Right cardiac atrium (tissue), 5 donors: ENCODE measurements at regions of chr5 and their contacts with region 1.

Region 1: GRCh38 chr5:180668835-180669596 is 19.6 kb upstream of the FLT4 start:
- DNase-seq: peak in 1 of 3 donors; percentile 37
- ATAC-seq: peak in 1 of 2 donors; percentile 24
- H3K4me3 ChIP-seq: no peak overlapping the region
- H3K27ac ChIP-seq: no peak overlapping the region
- H3K4me1 ChIP-seq: no peaks in the 10 kb centered on the region
- H3K27me3 ChIP-seq: no peaks in the 10 kb centered on the region

Region 2: DNA sequence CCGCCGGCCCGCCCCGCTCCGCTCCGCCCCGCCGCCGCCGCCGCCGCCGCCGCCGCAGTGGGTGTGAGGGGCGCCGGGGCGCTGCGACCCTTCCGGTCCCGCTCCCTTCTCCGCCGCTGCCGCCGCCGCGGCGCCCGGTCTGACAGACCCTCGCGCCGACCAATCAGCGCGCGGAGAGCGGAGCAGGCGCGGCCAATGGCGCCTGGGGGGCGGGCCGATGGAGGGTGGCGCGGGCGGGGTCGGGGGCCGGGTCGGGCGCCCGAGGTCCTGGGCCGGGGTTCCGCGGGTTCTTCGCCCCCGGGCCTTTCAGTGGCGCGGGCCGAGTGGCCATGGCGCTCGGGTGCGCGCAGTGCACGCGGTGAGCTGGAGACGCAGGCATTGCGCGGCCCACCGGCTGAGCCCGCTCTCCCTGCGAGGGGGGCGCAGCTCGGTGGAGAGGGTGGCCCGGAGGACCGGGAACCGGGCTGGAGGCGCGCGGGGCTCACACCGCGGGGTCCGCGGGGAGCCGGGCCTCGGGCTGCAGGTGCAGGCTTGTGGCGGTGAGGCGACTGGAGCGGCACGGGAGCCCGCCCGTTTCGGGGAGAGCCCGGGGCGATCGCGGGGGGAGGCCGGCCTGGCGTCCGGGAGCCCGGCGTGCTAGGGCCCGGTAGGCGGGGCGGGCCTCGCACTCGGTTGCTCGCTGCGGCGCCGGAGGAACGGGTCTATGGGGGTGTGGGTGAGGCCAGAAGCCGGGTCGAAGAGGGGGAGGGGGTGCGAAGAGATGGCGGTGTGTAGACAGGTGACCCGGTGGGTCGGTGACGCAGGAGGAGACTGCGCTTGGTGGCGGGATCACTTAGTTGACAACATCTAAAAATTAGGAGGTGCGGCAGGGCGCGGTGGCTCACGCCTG is 376.8 kb before region 1 on chr5 and contains the start of gene MAPK9:
- intact Hi-C with region 1: loop called in 1 of 4 experiments (anchors 5 kb)
- DNase-seq: peak; percentile 86 to 95 (median 94)
- ATAC-seq: peak; percentile 93 to 94
- H3K4me3 ChIP-seq: peak within 1 kb of the TSS; percentile 92
- H3K27ac ChIP-seq: peak within 1 kb of the TSS; percentile 93
- H3K4me1 ChIP-seq: peaks cover 2% of the 10 kb centered on the region
- H3K27me3 ChIP-seq: no peaks in the 10 kb centered on the region
- total RNA-seq, gene MAPK9: 43.6 to 47.4 (median 46.1) TPM

Region 3: DNA sequence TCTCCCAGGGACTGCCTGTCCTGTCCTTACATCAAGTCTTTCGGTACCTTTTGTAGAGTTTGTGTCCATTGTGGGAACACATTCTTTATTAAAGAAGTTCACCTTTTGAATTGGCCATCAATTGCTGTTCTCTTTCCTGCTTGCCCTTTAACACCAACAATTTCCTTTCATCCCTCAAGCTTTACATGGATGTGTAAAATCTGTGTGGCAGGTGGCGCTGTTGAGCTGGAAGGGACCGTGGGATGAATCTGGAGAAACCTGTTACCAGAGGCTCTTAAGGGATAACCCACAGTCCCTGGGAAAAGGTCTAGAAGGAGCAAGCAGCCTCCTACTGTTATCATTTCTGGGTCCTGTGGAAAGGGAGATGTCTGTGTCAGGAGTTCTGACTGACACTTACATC is 199.9 kb after region 1 on chr5:
- intact Hi-C with region 1: no loop called
- DNase-seq: peak; percentile 78 to 92 (median 88)
- ATAC-seq: peak; percentile 70 to 82
- H3K4me3 ChIP-seq: no peak overlapping the region
- H3K27ac ChIP-seq: no peak overlapping the region
- H3K4me1 ChIP-seq: peaks cover 2% of the 10 kb centered on the region
- H3K27me3 ChIP-seq: no peaks in the 10 kb centered on the region

Region 4: DNA sequence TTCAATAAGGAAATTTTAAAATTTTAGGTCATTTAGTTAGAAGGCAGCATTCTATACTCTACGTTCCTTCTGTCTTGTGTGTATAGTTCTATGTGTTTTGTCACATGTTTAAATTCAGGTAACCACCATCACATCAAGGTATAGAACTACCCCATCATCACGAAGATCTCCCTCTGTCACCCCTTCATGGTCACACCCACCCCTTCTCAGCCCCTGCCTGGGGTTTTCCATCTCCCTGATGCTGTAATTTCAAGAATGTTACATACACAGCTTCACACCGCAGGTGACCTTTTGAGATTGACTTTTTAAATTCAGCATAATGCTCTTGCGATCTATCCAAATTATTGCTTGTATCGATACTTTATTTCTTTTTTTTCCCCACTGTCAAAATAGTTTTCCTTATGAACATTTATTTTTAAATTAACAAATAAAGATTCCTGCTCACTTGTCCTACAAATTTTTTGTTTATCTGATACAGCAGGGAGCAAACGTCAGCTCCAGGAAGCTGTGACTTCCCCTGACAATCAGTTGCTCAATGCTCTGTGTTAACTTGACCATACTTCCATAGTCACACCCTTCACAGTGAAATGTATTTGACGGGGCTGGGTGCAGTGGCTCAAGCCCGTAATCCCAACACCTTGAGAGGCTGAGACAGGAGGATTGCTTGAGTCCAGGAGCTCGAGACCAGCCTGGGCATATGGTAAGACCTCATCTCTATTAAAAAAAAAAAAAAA is 240.1 kb after region 1 on chr5:
- intact Hi-C with region 1: no loop called
- DNase-seq: no peak
- ATAC-seq: no peak
- H3K4me3 ChIP-seq: no peak overlapping the region
- H3K27ac ChIP-seq: no peak overlapping the region
- H3K4me1 ChIP-seq: no peaks in the 10 kb centered on the region
- H3K27me3 ChIP-seq: no peaks in the 10 kb centered on the region